ENCODE measurements at regions of chr2 and their contacts with region 1.

Region 1: DNA sequence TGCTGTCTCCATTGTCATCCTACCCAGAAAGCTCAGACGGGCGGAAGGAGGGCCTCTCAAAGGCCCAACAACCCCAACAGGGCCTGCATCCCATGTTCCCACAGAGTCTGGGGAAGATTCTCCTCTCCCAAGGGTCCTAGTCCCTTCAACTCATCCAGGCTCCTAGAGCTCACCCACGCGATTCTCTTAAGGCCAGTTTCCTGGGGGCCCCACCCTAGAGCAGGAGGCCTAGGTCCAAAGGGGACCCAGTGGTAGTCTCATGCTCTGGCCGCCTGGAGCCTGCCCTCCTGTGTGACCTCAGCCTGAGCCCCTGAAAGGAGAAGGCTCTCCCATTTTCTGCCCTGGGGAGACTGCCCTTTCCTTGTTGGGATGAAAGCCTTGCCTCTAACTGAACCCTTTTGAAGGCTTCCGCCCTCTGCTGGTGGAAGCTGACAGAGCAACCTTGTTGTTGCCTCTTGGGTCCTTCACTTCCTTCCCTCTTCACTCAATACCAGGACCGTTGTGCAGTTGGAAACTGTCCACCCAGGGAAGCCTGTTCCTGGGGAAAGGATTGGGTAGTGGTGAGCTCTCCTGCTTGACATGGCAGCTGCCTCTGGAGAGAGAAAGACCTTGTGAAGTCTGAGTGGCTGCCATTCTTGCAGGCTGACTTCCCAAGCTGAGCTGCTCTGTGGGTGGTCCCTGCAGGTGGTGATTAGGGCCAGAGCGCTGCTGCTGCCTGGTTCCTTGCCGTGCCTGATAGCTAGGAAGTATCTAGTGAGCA is 86.0 kb upstream of the ALPP start:
- DNase-seq: peak; percentile 75
- H3K4me3 Mint-ChIP-seq: no peak overlapping the region
- H3K27ac Mint-ChIP-seq: no peak overlapping the region
- H3K4me1 Mint-ChIP-seq: peaks cover 11% of the 10 kb centered on the region
- H3K27me3 Mint-ChIP-seq: no peaks in the 10 kb centered on the region

Region 2: GRCh38 chr2:231900486-231900942 is 392.1 kb before region 1 on chr2:
- CTCF ChIA-PET with region 1: interaction called, 10 read pairs
- DNase-seq: peak; percentile 71
- H3K4me3 Mint-ChIP-seq: no peak overlapping the region
- H3K27ac Mint-ChIP-seq: no peak overlapping the region
- H3K4me1 Mint-ChIP-seq: no peaks in the 10 kb centered on the region
- H3K27me3 Mint-ChIP-seq: peaks cover 33% of the 10 kb centered on the region

Region 3: GRCh38 chr2:231919341-231920035 is 373.1 kb before region 1 on chr2:
- CTCF ChIA-PET with region 1: interaction called, 10 read pairs
- DNase-seq: no peak
- H3K4me3 Mint-ChIP-seq: no peak overlapping the region
- H3K27ac Mint-ChIP-seq: no peak overlapping the region
- H3K4me1 Mint-ChIP-seq: no peaks in the 10 kb centered on the region
- H3K27me3 Mint-ChIP-seq: peaks cover 54% of the 10 kb centered on the region

Region 4: GRCh38 chr2:232268636-232269165 is 23.9 kb before region 1 on chr2:
- CTCF ChIA-PET with region 1: interaction called, 10 read pairs
- DNase-seq: no peak
- H3K4me3 Mint-ChIP-seq: no peak overlapping the region
- H3K27ac Mint-ChIP-seq: no peak overlapping the region
- H3K4me1 Mint-ChIP-seq: no peaks in the 10 kb centered on the region
- H3K27me3 Mint-ChIP-seq: no peaks in the 10 kb centered on the region

Region 5: GRCh38 chr2:232310121-232310520 is 17.5 kb after region 1 on chr2:
- CTCF ChIA-PET with region 1: interaction called, 50 read pairs
- DNase-seq: peak; percentile 51
- H3K4me3 Mint-ChIP-seq: peak overlapping the region; percentile 11
- H3K27ac Mint-ChIP-seq: peak overlapping the region; percentile 93
- H3K4me1 Mint-ChIP-seq: peaks cover 77% of the 10 kb centered on the region
- H3K27me3 Mint-ChIP-seq: no peaks in the 10 kb centered on the region

Region 6: DNA sequence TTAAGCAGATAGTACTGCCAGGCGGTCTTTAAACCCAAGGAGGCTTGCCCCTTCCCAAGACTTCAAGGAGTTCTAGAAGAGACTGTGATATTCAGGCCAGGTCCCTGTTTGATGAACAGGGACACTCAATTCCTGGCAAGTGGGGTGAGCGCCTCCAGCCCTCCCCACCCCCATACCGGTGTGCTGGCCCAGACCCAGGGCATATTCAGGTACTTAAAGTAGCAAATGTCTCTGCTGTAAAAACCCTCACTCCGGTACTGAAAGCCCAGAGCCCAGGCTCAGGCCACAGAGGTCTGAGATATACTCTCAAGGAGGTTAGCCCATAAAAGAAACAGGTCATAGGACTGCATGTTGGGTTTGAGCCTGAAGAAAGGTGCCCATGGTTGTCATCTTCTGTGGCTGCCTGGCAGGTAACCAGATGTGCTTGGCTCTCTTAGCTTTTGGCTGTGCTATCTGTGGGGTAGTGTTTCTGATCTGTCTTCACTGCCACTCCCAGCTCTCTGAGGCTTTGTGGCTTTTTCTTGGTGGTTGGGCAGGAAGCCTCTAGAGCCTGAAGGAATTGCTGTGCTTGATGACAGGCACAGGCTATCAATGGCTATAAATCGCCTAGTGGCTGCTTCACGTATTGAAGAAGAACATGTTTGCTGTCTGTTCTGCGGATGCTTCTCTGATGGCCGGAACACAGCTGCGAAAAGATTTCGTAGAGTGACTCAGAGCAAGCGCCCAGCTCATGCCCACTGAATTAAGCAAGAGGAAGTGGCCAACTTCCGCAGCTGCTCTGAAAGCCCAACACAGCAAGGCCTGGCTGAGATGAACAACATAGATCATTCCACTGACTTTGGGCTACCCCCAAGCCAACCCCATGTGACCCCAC is 22.7 kb after region 1 on chr2:
- CTCF ChIA-PET with region 1: interaction called, 50 read pairs
- DNase-seq: peak; percentile 88
- H3K4me3 Mint-ChIP-seq: peak overlapping the region; percentile 47
- H3K27ac Mint-ChIP-seq: peak overlapping the region; percentile 96
- H3K4me1 Mint-ChIP-seq: peaks cover 92% of the 10 kb centered on the region
- H3K27me3 Mint-ChIP-seq: no peaks in the 10 kb centered on the region

Region 7: GRCh38 chr2:232321156-232321816 is 28.7 kb after region 1 on chr2:
- CTCF ChIA-PET with region 1: interaction called, 31 read pairs
- DNase-seq: peak; percentile 81
- H3K4me3 Mint-ChIP-seq: peak overlapping the region; percentile 45
- H3K27ac Mint-ChIP-seq: peak overlapping the region; percentile 93
- H3K4me1 Mint-ChIP-seq: peaks cover 66% of the 10 kb centered on the region
- H3K27me3 Mint-ChIP-seq: no peaks in the 10 kb centered on the region

Region 8: GRCh38 chr2:232473467-232473890 is 180.9 kb after region 1 on chr2:
- CTCF ChIA-PET with region 1: no interaction called
- DNase-seq: peak; percentile 11
- H3K4me3 Mint-ChIP-seq: no peak overlapping the region
- H3K27ac Mint-ChIP-seq: no peak overlapping the region
- H3K4me1 Mint-ChIP-seq: no peaks in the 10 kb centered on the region
- H3K27me3 Mint-ChIP-seq: peaks cover 62% of the 10 kb centered on the region

Region 9: DNA sequence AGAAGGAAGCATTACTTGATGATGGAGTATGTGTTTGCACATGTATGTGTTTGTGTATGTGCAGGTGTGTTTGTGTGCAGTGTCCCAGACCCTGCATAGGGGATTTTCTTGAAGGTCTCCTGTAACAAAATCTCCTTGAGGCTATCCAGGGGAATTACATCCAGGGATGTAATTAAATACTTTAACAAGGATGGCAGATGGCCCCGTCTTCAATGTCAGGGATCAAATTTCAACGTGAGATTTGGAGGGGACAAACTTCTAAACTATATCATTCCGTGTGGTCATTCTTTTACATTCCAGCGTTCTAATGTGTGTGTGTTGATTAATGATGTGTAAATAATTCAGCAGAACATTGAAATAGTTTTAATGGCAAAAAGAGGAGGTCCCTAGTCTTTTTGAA is 1382.4 kb after region 1 on chr2:
- CTCF ChIA-PET with region 1: no interaction called
- DNase-seq: no peak
- H3K4me3 Mint-ChIP-seq: no peak overlapping the region
- H3K27ac Mint-ChIP-seq: no peak overlapping the region
- H3K4me1 Mint-ChIP-seq: no peaks in the 10 kb centered on the region
- H3K27me3 Mint-ChIP-seq: peaks cover 10% of the 10 kb centered on the region